ENCODE measurements at regions of chr16 and their contacts with region 1.

Region 1: GRCh38 chr16:64440421-64440831 is 681.4 kb downstream of the CDH11 start:
- DNase-seq: no peak
- H3K4me3 ChIP-seq: no peak overlapping the region
- H3K27ac ChIP-seq: peak overlapping the region in 1 of 8 donors; percentile 7
- H3K4me1 ChIP-seq: no peaks in the 10 kb centered on the region
- H3K27me3 ChIP-seq: no peaks in the 10 kb centered on the region
- CTCF ChIP-seq: no peak
- POLR2A ChIP-seq: no peak

Region 2: GRCh38 chr16:64196444-64196843 is 244.0 kb before region 1 on chr16:
- intact Hi-C with region 1: no loop called
- DNase-seq: no peak
- H3K4me3 ChIP-seq: no peak overlapping the region
- H3K27ac ChIP-seq: no peak overlapping the region
- H3K4me1 ChIP-seq: no peaks in the 10 kb centered on the region
- H3K27me3 ChIP-seq: no peaks in the 10 kb centered on the region
- CTCF ChIP-seq: no peak
- POLR2A ChIP-seq: no peak

Region 3: GRCh38 chr16:64278196-64278595 is 162.2 kb before region 1 on chr16:
- intact Hi-C with region 1: no loop called
- DNase-seq: no peak
- H3K4me3 ChIP-seq: no peak overlapping the region
- H3K27ac ChIP-seq: no peak overlapping the region
- H3K4me1 ChIP-seq: no peaks in the 10 kb centered on the region
- H3K27me3 ChIP-seq: no peaks in the 10 kb centered on the region
- CTCF ChIP-seq: no peak
- POLR2A ChIP-seq: no peak

Region 4: GRCh38 chr16:64380751-64381150 is 59.7 kb before region 1 on chr16:
- intact Hi-C with region 1: loop called (anchors 10 kb)
- DNase-seq: no peak
- H3K4me3 ChIP-seq: no peak overlapping the region
- H3K27ac ChIP-seq: no peak overlapping the region
- H3K4me1 ChIP-seq: no peaks in the 10 kb centered on the region
- H3K27me3 ChIP-seq: no peaks in the 10 kb centered on the region
- CTCF ChIP-seq: no peak
- POLR2A ChIP-seq: no peak

Region 5: DNA sequence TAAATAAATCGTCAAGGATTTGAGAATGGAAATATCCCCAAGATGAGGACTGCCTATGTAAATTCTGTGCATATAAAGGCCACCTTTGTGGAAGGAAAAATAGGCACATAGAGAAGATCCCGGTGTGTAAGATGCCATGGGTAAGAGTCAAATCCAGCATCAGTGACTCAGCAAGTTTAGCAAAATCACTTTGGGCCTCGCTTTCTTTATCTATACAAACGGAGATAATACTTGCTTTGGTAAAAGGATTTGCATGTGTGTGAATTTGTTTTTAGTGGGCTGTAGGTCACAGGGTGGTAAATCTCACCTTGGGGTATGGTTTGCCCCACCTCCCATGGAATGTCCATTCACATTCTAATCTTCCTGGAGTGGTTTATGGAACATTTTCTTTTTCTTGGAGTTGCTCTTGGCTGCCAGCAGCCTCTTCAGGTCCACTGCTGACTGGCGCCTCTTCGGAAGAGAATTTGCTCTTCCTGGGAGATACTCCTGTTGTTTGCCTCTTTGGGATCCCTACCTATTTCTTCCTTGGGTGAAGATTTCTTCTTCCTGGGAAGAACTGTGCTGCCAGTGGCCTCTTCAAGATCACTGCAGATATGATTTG is 93.9 kb after region 1 on chr16:
- intact Hi-C with region 1: no loop called
- DNase-seq: no peak
- H3K4me3 ChIP-seq: no peak overlapping the region
- H3K27ac ChIP-seq: no peak overlapping the region
- H3K4me1 ChIP-seq: no peaks in the 10 kb centered on the region
- H3K27me3 ChIP-seq: no peaks in the 10 kb centered on the region
- CTCF ChIP-seq: no peak
- POLR2A ChIP-seq: no peak

Measured in spleen (tissue), 13 donors.